Esophagus muscularis mucosa (tissue), 4 donors: ENCODE measurements at regions of chr22 and their contacts with region 1.

Region 1: DNA sequence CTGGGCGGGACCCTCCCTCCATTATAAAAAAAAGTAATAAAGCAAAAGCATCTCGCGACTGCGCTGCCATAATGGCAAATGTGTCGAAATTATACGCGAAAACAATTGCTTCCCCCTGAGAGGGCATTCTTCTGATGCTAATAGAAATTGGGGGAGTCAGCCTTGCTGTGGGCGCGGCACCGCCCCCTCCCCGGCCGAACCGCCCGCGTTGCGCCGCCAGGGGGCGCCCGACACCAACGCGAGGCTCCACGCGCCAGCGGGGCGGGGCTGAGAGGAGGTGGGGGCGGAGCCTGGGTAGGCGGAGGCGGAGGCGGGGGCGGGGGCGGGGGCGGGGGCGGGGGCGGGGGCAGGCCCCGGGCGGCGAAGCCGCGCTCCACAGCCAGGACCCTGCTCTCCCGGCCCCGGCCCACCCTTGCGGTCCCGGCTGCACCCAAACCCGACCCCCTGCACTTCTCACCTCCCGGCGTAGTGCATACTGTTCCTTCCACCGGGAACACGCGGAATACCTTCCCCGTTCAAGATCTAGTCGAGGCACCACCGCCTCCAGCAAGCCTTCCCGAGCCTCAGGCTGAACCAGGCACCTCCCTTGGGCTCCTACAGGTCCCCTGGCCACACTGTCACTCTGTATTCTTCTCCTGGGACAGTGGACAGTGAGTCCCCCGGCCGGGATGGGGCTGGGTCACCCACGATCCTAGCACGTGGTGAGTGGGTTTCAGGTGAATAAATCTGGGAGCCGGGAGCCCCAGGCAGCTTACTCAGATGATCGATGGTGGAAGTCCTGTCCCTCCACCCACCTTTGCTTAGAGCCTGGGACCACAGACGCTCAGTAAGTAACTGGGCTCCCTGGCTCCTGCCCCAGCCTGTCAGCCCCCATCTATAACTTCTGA is 15.5 kb upstream of the UPK3A start:
- DNase-seq: no peak
- H3K4me3 ChIP-seq: peak overlapping the region; percentile 59 to 70 (median 62)
- H3K27ac ChIP-seq: peak overlapping the region in 3 of 4 donors; percentile 18 to 62 (median 38)
- H3K4me1 ChIP-seq: peaks cover 26 to 52% (median 39%) of the 10 kb centered on the region in 4 donors
- H3K27me3 ChIP-seq: no peaks in the 10 kb centered on the region
- CTCF ChIP-seq: peak; percentile 88 to 93 (median 91)
- EP300 ChIP-seq: no peak
- POLR2A ChIP-seq: no peak

Region 2: DNA sequence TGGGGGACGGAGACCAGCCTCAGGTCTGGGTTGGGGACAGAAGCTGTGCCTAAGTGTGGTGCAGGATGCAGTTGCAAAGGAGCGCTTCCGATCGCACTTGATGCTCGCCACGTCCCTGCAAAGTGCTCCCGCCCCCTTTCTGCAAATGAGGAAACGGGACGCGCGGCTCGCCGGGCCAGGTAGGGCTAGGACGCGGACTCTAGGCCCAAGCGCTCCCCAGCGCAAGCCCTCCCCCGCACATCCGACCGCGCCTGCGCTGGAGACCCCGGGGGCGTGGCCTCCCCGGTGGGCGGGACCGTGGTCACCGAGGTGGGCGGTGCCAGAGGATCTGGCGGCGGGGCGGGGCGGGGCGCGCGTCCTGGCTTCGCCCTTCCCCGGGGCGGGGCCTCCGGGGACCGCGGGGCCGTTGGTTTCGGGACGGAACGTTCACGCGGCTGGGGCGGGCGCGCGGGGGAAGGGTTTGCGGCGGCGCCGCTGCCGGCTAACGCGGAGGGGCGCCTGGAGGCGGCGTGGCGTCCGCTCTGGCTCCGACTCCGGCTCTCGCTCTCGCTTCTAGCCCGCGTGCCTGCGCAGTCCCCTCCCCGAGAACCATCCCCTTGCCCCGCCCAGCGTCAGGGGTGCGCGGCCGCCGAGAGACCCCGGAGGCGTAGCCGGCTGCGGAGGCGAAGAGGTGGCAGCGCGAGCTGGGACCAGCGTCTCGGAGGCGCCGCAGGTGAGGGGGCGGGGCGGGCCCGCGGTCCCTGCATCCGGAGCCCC is 40.4 kb after region 1 on chr22 and contains the start of gene FAM118A:
- intact Hi-C with region 1: loop called (anchors 5 kb)
- DNase-seq: peak; percentile 97
- H3K4me3 ChIP-seq: peak within 1 kb of the TSS; percentile 96 to 100 (median 98)
- H3K27ac ChIP-seq: peak within 1 kb of the TSS; percentile 88 to 92 (median 91)
- H3K4me1 ChIP-seq: peaks cover 15 to 40% (median 33%) of the 10 kb centered on the region in 4 donors
- H3K27me3 ChIP-seq: no peaks in the 10 kb centered on the region
- CTCF ChIP-seq: peak; percentile 13 to 24 (median 19)
- EP300 ChIP-seq: no peak
- POLR2A ChIP-seq: peak; percentile 77
- total RNA-seq, gene FAM118A: 24.4 to 45.8 (median 32.1) TPM

Region 3: DNA sequence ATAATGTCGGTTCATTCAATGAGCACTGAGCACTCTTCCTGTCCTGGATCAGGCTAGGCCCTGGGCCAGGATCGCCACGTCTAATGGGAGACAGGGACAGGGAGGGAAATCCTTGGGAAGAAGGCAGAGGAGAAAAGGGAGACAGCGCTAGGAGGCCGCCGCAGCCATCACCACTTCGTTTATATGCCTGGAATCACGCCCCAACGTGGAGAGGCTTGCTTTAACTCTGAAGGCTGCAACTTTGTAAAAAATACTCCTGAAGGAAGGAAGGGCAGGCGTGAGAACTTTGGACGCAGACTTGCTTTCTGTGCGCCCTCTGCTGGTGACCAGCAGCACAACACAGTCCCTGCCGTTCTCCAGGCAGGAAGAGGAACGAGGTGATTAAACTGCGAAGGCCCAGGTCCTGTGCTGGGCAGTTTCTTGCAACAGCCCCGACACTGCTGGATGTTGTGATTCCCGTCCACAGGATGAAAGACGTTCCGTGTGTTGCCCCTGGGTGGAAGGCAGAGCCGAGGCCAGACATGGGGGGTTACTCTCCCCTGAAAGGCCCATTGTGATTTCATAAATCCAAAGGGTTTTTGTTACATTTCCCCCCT is 166.4 kb after region 1 on chr22:
- intact Hi-C with region 1: loop called (anchors 1 kb)
- DNase-seq: peak; percentile 96
- H3K4me3 ChIP-seq: peak overlapping the region in 3 of 4 donors; percentile 19 to 42 (median 30)
- H3K27ac ChIP-seq: peak overlapping the region; percentile 60 to 81 (median 61)
- H3K4me1 ChIP-seq: peaks cover 5 to 13% (median 8%) of the 10 kb centered on the region in 4 donors
- H3K27me3 ChIP-seq: no peaks in the 10 kb centered on the region
- CTCF ChIP-seq: peak; percentile 96 to 98 (median 97)
- EP300 ChIP-seq: no peak
- POLR2A ChIP-seq: no peak